Posterior vena cava (tissue), 2 donors: ENCODE measurements at regions of chr2 and their contacts with region 1.

Region 1: DNA sequence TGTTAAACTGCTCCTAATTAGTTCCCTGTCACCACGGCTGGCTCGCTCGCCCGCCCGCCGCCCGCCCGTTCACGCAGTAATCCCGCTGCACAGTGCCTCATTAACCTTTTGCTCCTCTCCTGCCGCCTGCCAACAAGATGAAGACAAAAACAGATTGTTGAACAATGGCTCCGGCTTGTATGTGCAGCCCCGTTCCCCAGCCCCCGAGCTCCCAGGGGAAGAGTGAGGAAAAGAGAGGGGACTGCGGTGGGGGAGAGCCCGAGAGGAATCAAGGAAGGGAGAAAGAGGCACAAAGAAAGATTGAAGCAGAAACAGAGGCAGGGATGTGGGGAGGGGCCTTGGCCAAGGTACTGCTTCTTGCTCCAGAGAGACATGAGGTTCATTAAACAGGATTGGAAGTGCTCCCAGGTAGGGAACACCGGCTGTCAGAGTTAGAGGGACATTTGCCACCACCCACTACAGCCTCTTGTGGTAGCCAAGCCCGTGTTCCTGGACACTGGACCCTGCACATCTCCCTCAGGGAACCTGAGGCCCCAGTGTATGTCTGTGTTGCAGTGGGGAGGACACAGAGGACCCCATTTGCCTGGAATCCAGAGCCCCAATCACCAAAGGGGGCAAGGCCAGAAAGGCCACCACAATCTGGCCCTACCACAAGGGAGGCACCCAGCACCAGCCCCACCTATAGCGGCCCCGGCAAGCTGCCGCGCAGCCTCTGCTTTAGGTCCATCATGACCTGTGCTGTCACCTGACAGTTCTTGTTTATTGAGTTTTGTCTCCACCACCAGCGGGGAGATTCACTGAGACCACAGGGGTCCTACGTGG is 38.1 kb downstream of the EMX1 start:
- DNase-seq: no peak

Region 2: GRCh38 chr2:71154798-71155197 is 1800.6 kb before region 1 on chr2:
- intact Hi-C with region 1: loop called in 1 of 2 experiments (anchors 5 kb)
- DNase-seq: no peak

Region 3: GRCh38 chr2:72539071-72539552 is 416.3 kb before region 1 on chr2:
- intact Hi-C with region 1: no loop called
- DNase-seq: no peak

Region 4: DNA sequence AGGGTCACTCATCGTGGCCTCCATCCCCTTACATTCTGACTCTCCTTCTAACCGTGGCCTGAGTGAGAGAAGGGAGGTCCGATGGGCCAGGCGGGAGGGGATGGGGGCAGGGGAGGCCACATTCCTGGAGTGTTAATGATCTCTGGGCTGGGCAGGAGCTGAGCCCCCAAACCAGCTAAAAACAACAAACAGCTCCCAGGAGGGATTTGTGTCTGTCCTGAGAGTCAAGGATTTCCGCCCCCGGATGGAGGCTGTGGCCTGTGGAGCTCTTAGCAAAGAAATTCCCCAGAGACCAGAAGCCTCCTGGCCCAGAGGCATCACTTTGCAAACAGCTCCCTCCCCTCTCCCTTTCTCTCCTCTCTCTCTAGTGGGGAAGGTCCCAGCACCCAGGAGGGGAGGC is 14.7 kb before region 1 on chr2:
- intact Hi-C with region 1: no loop called
- DNase-seq: no peak